Naive thymus-derived CD4-positive, alpha-beta T cell (primary cell): ENCODE measurements at regions of chr18 and their contacts with region 1.

Region 1: GRCh38 chr18:69885841-69886531 is 61.7 kb downstream of the CD226 start:
- DNase-seq: peak in 1 of 9 donors; percentile 50
- ATAC-seq: peak; percentile 32
- H3K4me3 ChIP-seq: no peak overlapping the region
- H3K4me3 Mint-ChIP-seq: peak overlapping the region in 2 of 10 donors; percentile 36 to 89
- H3K27ac ChIP-seq: no peak overlapping the region
- H3K27ac Mint-ChIP-seq: peak overlapping the region in 6 of 9 donors; percentile 5 to 99 (median 62)
- H3K4me1 ChIP-seq: peaks cover 4 to 28% of the 10 kb centered on the region in 2 donors
- H3K4me1 Mint-ChIP-seq: peaks cover 38 to 81% (median 73%) of the 10 kb centered on the region in 7 donors
- H3K27me3 ChIP-seq: no peaks in the 10 kb centered on the region
- H3K27me3 Mint-ChIP-seq: no peaks in the 10 kb centered on the region

Region 2: DNA sequence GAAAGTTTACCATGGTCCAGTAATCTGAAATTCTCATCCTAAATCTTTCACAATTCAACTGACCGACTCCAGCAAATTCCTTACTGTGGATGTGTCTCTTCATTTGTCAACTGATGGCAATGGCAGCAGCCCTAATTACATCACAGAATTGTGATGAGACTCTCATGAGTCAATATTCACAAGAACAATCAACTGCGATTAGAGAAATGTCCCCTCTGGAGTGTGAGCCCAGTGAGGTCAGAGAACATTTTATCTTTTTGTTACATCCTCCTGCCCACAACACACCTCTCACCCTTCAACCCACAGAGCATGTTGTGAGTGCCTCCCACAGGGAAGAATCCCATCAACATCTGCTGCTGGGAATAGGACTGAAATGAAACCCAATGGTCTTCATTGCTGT is 11.9 kb before region 1 on chr18:
- CTCF ChIA-PET with region 1: interaction called, 3 read pairs
- POLR2A ChIA-PET with region 1: interaction called, 3 read pairs
- intact Hi-C with region 1: loop called in 1 of 2 experiments (anchors 2 kb)
- DNase-seq: no peak
- ATAC-seq: peak; percentile 10
- H3K4me3 ChIP-seq: no peak overlapping the region
- H3K4me3 Mint-ChIP-seq: no peak overlapping the region
- H3K27ac ChIP-seq: no peak overlapping the region
- H3K27ac Mint-ChIP-seq: peak overlapping the region in 2 of 9 donors; percentile 36 to 41
- H3K4me1 ChIP-seq: peaks cover 0 to 4% of the 10 kb centered on the region in 2 donors
- H3K4me1 Mint-ChIP-seq: peaks cover 13 to 50% (median 33%) of the 10 kb centered on the region in 7 donors
- H3K27me3 ChIP-seq: no peaks in the 10 kb centered on the region
- H3K27me3 Mint-ChIP-seq: no peaks in the 10 kb centered on the region

Region 3: GRCh38 chr18:69943021-69943420 is 57.0 kb after region 1 on chr18:
- CTCF ChIA-PET with region 1: interaction called, 3 read pairs
- POLR2A ChIA-PET with region 1: no interaction called
- intact Hi-C with region 1: loop called in 1 of 2 experiments (anchors 2 kb)
- DNase-seq: no peak
- ATAC-seq: no peak
- H3K4me3 ChIP-seq: peak overlapping the region; percentile 12
- H3K4me3 Mint-ChIP-seq: peak overlapping the region in 7 of 10 donors; percentile 40 to 73 (median 61)
- H3K27ac ChIP-seq: no peak overlapping the region
- H3K27ac Mint-ChIP-seq: peak overlapping the region in 6 of 9 donors; percentile 21 to 87 (median 71)
- H3K4me1 ChIP-seq: peaks cover 37 to 56% of the 10 kb centered on the region in 2 donors
- H3K4me1 Mint-ChIP-seq: peaks cover 0 to 77% (median 61%) of the 10 kb centered on the region in 7 donors
- H3K27me3 ChIP-seq: no peaks in the 10 kb centered on the region
- H3K27me3 Mint-ChIP-seq: no peaks in the 10 kb centered on the region